PC-9 (cell line): ENCODE measurements at regions of chr15 and their contacts with region 1.

Region 1: DNA sequence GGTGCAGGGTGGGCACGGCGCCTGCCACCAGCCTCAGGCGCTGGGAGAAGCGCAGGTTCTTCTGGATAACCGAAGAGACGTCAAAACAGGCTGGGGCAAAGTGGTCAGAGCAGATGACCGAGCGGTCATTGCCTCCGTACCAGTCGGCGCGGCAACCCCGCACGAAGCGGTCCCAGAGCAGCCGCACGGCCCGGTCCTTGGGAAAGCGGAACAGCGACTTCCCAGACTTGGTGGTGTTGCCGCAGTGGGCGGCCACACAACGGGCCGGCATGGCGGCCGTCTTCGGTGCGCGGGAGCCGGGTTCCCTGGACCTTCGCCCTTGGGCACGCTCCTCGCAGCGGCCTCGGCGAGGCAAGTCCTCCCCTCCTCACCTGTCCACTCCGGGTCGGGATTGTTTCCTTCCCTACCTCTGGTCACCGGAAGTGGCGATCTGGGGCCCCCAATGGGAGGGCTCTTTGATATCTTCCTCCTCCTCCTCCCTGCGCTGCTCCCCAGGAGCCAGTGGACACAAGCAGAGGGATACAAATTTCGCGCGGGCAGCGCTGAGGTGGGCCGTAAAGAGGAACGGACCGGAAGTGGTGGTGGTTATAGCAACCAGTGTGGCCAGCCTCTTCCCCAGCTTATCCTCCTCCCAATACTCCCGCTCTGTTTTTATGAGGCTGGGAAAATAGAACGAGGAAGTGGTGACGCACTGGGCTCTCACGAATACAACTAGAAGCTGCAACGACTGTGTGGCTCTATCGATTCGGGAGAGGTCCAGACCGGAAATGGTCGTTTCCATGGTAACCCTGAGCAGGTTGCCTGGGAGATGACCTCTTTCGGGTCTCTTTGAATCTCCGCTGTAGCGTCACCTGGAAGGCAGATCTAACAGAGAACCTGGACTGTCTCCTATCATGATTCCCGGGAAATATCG is at the starts of genes LRRC49 and THAP10:
- DNase-seq: peak; percentile 87 to 88
- H3K4me3 ChIP-seq: peak within 1 kb of the TSS; percentile 91
- H3K27ac ChIP-seq: peak within 1 kb of the TSS; percentile 54
- H3K4me1 ChIP-seq: peaks cover 22% of the 10 kb centered on the region
- H3K27me3 ChIP-seq: no peaks in the 10 kb centered on the region
- CTCF ChIP-seq: no peak
- total RNA-seq, gene LRRC49: 6.2 and 6.3 TPM in 2 replicates
- total RNA-seq, gene THAP10: 4.2 and 5.5 TPM in 2 replicates

Region 2: DNA sequence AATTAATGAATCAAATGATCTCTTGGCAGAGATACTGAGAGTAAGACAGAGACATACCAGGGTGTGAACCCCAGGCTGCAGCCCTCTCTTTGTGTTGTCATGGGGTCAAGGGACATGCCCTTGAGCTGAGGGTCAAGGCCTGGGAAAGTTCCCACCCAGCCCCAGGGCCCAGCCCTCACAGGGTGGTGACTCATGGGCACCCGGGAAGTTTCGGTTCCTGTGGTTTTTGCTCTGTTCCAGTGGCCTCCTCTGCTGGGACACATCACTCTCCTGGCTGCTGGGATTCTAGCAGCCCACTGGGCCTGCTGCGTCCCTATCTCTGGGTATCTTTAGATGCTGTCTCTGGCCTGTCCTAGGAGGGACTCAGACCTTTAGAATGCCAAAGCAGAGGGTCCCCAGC is 646.3 kb before region 1 on chr15:
- CTCF ChIA-PET with region 1: no interaction called
- POLR2A ChIA-PET with region 1: no interaction called
- intact Hi-C with region 1: no loop called
- DNase-seq: peak; percentile 72 to 74
- H3K4me3 ChIP-seq: no peak overlapping the region
- H3K27ac ChIP-seq: peak overlapping the region; percentile 72
- H3K4me1 ChIP-seq: peaks cover 51% of the 10 kb centered on the region
- H3K27me3 ChIP-seq: no peaks in the 10 kb centered on the region
- CTCF ChIP-seq: no peak

Region 3: DNA sequence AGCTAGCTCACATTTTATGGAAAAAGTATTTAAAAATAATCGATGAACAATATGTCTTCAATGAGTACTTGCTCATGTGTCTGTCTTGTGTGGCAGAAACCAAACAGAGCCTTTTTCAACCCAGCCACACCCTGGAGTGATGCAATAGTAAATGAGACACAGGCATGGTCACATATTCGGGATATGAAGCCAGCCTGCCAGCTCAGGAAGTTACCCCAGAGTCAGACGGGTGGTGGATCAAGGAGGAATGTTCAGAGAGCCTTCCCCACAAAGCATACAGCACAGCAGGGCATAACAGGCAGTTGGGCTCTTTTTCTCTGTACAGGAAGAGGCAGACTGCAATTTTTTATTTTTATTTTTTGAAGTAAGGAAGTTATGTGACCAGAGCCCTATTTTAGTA is 65.6 kb before region 1 on chr15:
- CTCF ChIA-PET with region 1: no interaction called
- POLR2A ChIA-PET with region 1: no interaction called
- intact Hi-C with region 1: loop called (anchors 5 kb)
- DNase-seq: peak; percentile 40 to 80
- H3K4me3 ChIP-seq: no peak overlapping the region
- H3K27ac ChIP-seq: peak overlapping the region; percentile 90
- H3K4me1 ChIP-seq: peaks cover 30% of the 10 kb centered on the region
- H3K27me3 ChIP-seq: no peaks in the 10 kb centered on the region
- CTCF ChIP-seq: no peak

Region 4: GRCh38 chr15:70853821-70854666 is 38.2 kb before region 1 on chr15 and contains the start of gene LARP6:
- CTCF ChIA-PET with region 1: no interaction called
- POLR2A ChIA-PET with region 1: no interaction called
- intact Hi-C with region 1: no loop called
- DNase-seq: peak in 1 of 2 experiments; percentile 72
- H3K4me3 ChIP-seq: peak within 1 kb of the TSS; percentile 68
- H3K27ac ChIP-seq: peak within 1 kb of the TSS; percentile 47; the same call in 1 of the 2 replicates
- H3K4me1 ChIP-seq: peaks cover 36% of the 10 kb centered on the region
- H3K27me3 ChIP-seq: no peaks in the 10 kb centered on the region
- CTCF ChIP-seq: no peak
- total RNA-seq, gene LARP6: 31.2 and 33.4 TPM in 2 replicates

Region 5: GRCh38 chr15:71011503-71012155 is 119.4 kb after region 1 on chr15:
- CTCF ChIA-PET with region 1: no interaction called
- POLR2A ChIA-PET with region 1: no interaction called
- intact Hi-C with region 1: loop called (anchors 1 kb)
- DNase-seq: peak in 1 of 2 experiments; percentile 21
- H3K4me3 ChIP-seq: no peak overlapping the region
- H3K27ac ChIP-seq: no peak overlapping the region
- H3K4me1 ChIP-seq: no peaks in the 10 kb centered on the region
- H3K27me3 ChIP-seq: no peaks in the 10 kb centered on the region
- CTCF ChIP-seq: peak; percentile 83

Region 6: GRCh38 chr15:71278989-71279756 is 386.9 kb after region 1 on chr15:
- CTCF ChIA-PET with region 1: no interaction called
- POLR2A ChIA-PET with region 1: no interaction called
- intact Hi-C with region 1: loop called (anchors 10 kb)
- DNase-seq: peak; percentile 77 to 96
- H3K4me3 ChIP-seq: 0 out of 2 replicates have a peak overlapping the region, but pooled peaks have one; percentile 10
- H3K27ac ChIP-seq: peak overlapping the region; percentile 99
- H3K4me1 ChIP-seq: peaks cover 75% of the 10 kb centered on the region
- H3K27me3 ChIP-seq: no peaks in the 10 kb centered on the region
- CTCF ChIP-seq: no peak